Mammary epithelial cell (primary cell): ENCODE measurements at regions of chr11 and their contacts with region 1.

Region 1: GRCh38 chr11:76307396-76307795 is 73.5 kb downstream of the THAP12 start:
- DNase-seq: no peak
- H3K4me3 ChIP-seq: no peak overlapping the region
- H3K27ac ChIP-seq: no peak overlapping the region
- H3K4me1 ChIP-seq: no peaks in the 10 kb centered on the region
- H3K27me3 ChIP-seq: peaks cover 5% of the 10 kb centered on the region
- CTCF ChIP-seq: no peak

Region 2: GRCh38 chr11:75562048-75562835 is 745.2 kb before region 1 on chr11 and contains the start of gene SERPINH1:
- CTCF ChIA-PET with region 1: interaction called, 13 read pairs
- dilution Hi-C with region 1: no loop called
- in situ Hi-C with region 1: no loop called
- intact Hi-C with region 1: no loop called
- DNase-seq: peak; percentile 73
- H3K4me3 ChIP-seq: peak within 1 kb of the TSS; percentile 60 to 74 (median 66)
- H3K27ac ChIP-seq: peak within 1 kb of the TSS; percentile 75
- H3K4me1 ChIP-seq: peaks cover 51% of the 10 kb centered on the region
- H3K27me3 ChIP-seq: no peaks in the 10 kb centered on the region
- CTCF ChIP-seq: no peak
- total RNA-seq, gene SERPINH1: 32.5 to 519 TPM

Region 3: GRCh38 chr11:76228071-76228874 is 79.1 kb before region 1 on chr11:
- CTCF ChIA-PET with region 1: interaction called, 10 read pairs
- dilution Hi-C with region 1: no loop called
- in situ Hi-C with region 1: no loop called
- intact Hi-C with region 1: no loop called
- DNase-seq: no peak
- H3K4me3 ChIP-seq: no peak overlapping the region
- H3K27ac ChIP-seq: no peak overlapping the region
- H3K4me1 ChIP-seq: no peaks in the 10 kb centered on the region
- H3K27me3 ChIP-seq: no peaks in the 10 kb centered on the region
- CTCF ChIP-seq: no peak